Naive thymus-derived CD4-positive, alpha-beta T cell (primary cell): ENCODE measurements at regions of chr4 and their contacts with region 1.

Region 1: GRCh38 chr4:173505924-173506518 is 24.0 kb downstream of the HAND2 start:
- DNase-seq: no peak
- ATAC-seq: peak; percentile 49
- H3K4me3 ChIP-seq: peak overlapping the region; percentile 26
- H3K4me3 Mint-ChIP-seq: peak overlapping the region in 9 of 10 donors; percentile 58 to 85 (median 81)
- H3K27ac ChIP-seq: no peak overlapping the region
- H3K27ac Mint-ChIP-seq: no peak overlapping the region
- H3K4me1 ChIP-seq: peaks cover 4 to 24% of the 10 kb centered on the region in 2 donors
- H3K4me1 Mint-ChIP-seq: peaks cover 16 to 56% (median 44%) of the 10 kb centered on the region in 7 donors
- H3K27me3 ChIP-seq: peaks cover 0 to 38% of the 10 kb centered on the region in 2 donors
- H3K27me3 Mint-ChIP-seq: peaks cover 83 to 96% (median 90%) of the 10 kb centered on the region in 5 donors

Region 2: DNA sequence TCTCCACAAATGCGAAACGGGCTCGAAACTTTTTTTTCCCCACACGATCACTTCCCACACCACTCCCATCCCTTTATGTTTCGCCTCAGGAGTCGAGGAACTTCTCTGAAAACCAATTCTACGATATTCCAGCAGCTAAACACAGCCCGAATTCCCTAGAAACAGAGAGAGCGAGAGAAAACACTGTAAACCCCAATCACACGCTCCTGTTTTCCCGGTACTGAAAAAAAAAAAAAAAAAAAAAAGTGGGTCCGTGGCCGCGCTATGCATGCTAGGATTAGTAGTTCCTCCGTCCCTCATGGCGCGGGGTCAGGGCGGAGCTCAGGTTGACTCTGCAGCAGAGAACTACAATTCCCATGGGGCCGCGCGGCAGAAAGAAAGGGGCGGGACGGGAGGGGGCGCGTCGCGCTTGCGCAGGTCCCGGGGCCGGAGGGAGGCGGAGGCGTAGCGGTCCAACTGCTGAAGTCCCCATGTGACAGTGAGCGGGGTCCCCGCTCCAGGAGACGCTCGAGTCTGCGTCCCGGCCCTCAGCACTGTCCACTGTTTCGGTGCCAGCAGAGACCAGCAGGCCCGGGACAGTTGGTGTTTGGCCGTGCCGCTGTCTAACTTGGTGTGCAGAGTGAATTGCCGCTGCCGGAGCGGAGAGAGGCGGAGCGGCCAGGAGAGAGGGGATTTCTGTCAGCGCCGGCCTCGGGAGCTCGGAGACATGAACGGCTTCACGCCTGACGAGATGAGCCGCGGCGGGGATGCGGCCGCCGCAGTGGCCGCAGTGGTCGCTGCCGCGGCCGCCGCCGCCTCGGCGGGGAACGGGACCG is 135.3 kb before region 1 on chr4 and contains the start of gene SAP30:
- CTCF ChIA-PET with region 1: no interaction called
- POLR2A ChIA-PET with region 1: no interaction called
- intact Hi-C with region 1: no loop called
- DNase-seq: peak; percentile 88 to 97 (median 91)
- ATAC-seq: peak; percentile 91
- H3K4me3 ChIP-seq: peak within 1 kb of the TSS; percentile 99
- H3K4me3 Mint-ChIP-seq: peak within 1 kb of the TSS; percentile 89 to 100 (median 98)
- H3K27ac ChIP-seq: peak within 1 kb of the TSS; percentile 82
- H3K27ac Mint-ChIP-seq: peak within 1 kb of the TSS; percentile 88 to 99 (median 97)
- H3K4me1 ChIP-seq: peaks cover 5 to 20% of the 10 kb centered on the region in 2 donors
- H3K4me1 Mint-ChIP-seq: peaks cover 14 to 46% (median 18%) of the 10 kb centered on the region in 7 donors
- H3K27me3 ChIP-seq: peaks cover 0 to 10% of the 10 kb centered on the region in 2 donors
- H3K27me3 Mint-ChIP-seq: peaks cover 2 to 29% (median 17%) of the 10 kb centered on the region in 5 donors
- total RNA-seq, gene SAP30: 0.48 to 27.4 (median 1.1) TPM

Region 3: DNA sequence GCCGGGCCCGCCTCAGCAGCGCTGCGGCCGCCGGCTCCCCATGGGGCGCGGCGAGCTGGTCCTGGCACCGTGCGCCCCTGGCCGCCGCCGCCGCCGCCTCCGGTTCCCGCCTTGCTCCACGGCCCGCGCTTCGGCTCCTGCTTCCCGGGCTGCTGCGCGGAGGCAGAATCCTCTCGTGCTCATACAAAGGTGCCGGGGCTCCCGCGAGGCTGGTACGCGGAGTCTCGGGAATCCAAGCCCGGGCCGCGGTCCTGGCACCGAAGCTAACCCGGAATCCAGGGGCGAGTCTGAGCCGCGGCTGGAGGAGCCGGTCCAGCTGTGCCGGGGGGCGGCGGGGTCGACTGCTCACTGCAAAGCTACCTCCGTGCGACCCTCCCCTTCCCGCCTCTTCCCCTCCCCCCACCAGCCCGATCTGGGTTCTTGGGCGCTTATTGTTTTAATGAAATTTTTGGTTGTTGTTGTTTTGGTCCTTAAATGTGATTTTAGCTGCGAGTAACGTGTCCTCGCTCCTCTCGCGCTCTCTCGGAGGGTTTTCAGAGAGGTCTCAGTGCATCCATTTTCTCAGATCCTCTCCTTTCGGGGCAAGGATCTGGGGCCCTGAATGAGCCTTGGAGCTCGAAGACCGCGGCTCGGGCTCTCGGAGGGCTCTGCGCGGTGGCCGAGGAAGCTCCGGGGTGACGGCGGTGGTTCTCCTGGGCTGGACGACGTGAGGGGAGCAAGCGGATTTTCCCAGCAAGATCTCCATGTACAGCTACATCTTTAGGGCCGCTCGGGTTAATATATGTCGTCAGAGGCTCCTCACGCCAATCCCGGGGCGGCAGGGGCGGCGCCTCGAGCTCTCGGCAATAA is 23.7 kb after region 1 on chr4 and contains the start of gene HAND2:
- CTCF ChIA-PET with region 1: no interaction called
- POLR2A ChIA-PET with region 1: no interaction called
- intact Hi-C with region 1: loop called in 1 of 2 experiments (anchors 2 kb)
- DNase-seq: no peak
- ATAC-seq: no peak
- H3K4me3 ChIP-seq: no peak within 1 kb of the TSS
- H3K4me3 Mint-ChIP-seq: peak within 1 kb of the TSS; percentile 57 to 79 (median 72)
- H3K27ac ChIP-seq: no peak within 1 kb of the TSS
- H3K27ac Mint-ChIP-seq: peak within 1 kb of the TSS in 4 of 9 donors; percentile 19 to 87 (median 58)
- H3K4me1 ChIP-seq: peaks cover 4 to 6% of the 10 kb centered on the region in 2 donors
- H3K4me1 Mint-ChIP-seq: peaks cover 5 to 33% (median 27%) of the 10 kb centered on the region in 7 donors
- H3K27me3 ChIP-seq: peaks cover 9 to 52% of the 10 kb centered on the region in 2 donors
- H3K27me3 Mint-ChIP-seq: peaks cover 88 to 91% (median 90%) of the 10 kb centered on the region in 5 donors
- total RNA-seq, gene HAND2: not detected

Region 4: GRCh38 chr4:173752610-173753230 is 246.7 kb after region 1 on chr4:
- CTCF ChIA-PET with region 1: no interaction called
- POLR2A ChIA-PET with region 1: no interaction called
- intact Hi-C with region 1: loop called in 1 of 2 experiments (anchors 1 kb)
- DNase-seq: peak in 2 of 9 donors; percentile 1 to 31
- ATAC-seq: no peak
- H3K4me3 ChIP-seq: no peak overlapping the region
- H3K4me3 Mint-ChIP-seq: no peak overlapping the region
- H3K27ac ChIP-seq: no peak overlapping the region
- H3K27ac Mint-ChIP-seq: no peak overlapping the region
- H3K4me1 ChIP-seq: no peaks in the 10 kb centered on the region
- H3K4me1 Mint-ChIP-seq: no peaks in the 10 kb centered on the region
- H3K27me3 ChIP-seq: no peaks in the 10 kb centered on the region
- H3K27me3 Mint-ChIP-seq: peaks cover 0 to 11% (median 0%) of the 10 kb centered on the region in 5 donors

Region 5: GRCh38 chr4:173990126-173990868 is 484.3 kb after region 1 on chr4:
- CTCF ChIA-PET with region 1: no interaction called
- POLR2A ChIA-PET with region 1: no interaction called
- intact Hi-C with region 1: loop called in 1 of 2 experiments (anchors 5 kb)
- DNase-seq: no peak
- ATAC-seq: no peak
- H3K4me3 ChIP-seq: no peak overlapping the region
- H3K4me3 Mint-ChIP-seq: no peak overlapping the region
- H3K27ac ChIP-seq: no peak overlapping the region
- H3K27ac Mint-ChIP-seq: no peak overlapping the region
- H3K4me1 ChIP-seq: no peaks in the 10 kb centered on the region
- H3K4me1 Mint-ChIP-seq: peaks cover 0 to 2% (median 0%) of the 10 kb centered on the region in 7 donors
- H3K27me3 ChIP-seq: peaks cover 0 to 3% of the 10 kb centered on the region in 2 donors
- H3K27me3 Mint-ChIP-seq: peaks cover 0 to 9% (median 5%) of the 10 kb centered on the region in 5 donors

Region 6: DNA sequence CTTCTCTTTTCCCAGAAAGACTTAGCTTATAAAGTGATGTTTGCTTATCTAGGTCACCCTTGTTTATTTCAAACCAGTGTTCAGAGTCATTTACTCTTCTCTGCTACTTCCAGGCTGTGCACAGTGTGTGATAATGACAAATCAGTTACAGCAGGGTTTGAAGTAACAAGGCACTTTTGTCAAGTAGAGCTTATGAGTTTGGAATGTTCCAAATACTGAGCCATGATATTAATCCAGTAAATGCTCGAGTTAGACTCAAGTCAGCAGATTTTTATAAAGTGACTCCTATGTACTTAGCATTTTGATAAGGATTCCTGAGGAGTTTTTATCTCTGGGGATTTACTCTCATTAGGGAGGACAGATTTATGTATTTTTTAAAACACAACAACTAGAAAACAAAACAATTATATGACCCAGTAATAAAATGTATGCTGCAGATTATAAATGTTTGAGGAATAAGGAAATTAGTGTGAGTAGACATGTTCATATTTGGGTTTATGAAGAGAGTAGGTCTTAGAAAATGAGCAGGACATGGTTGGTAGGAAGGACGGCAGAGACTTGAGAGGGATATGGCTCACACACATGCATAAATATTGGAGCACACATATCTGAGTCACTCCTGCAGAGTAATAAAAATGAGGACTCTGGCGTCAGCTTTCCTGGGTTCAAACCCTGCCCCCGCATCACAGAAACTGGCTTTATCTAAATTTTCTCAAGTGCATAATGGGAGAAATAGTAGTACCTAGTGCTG is 506.3 kb after region 1 on chr4:
- CTCF ChIA-PET with region 1: no interaction called
- POLR2A ChIA-PET with region 1: no interaction called
- intact Hi-C with region 1: no loop called
- DNase-seq: no peak
- ATAC-seq: no peak
- H3K4me3 ChIP-seq: no peak overlapping the region
- H3K4me3 Mint-ChIP-seq: no peak overlapping the region
- H3K27ac ChIP-seq: no peak overlapping the region
- H3K27ac Mint-ChIP-seq: no peak overlapping the region
- H3K4me1 ChIP-seq: no peaks in the 10 kb centered on the region
- H3K4me1 Mint-ChIP-seq: no peaks in the 10 kb centered on the region
- H3K27me3 ChIP-seq: no peaks in the 10 kb centered on the region
- H3K27me3 Mint-ChIP-seq: peaks cover 0 to 10% (median 5%) of the 10 kb centered on the region in 5 donors

Region 7: DNA sequence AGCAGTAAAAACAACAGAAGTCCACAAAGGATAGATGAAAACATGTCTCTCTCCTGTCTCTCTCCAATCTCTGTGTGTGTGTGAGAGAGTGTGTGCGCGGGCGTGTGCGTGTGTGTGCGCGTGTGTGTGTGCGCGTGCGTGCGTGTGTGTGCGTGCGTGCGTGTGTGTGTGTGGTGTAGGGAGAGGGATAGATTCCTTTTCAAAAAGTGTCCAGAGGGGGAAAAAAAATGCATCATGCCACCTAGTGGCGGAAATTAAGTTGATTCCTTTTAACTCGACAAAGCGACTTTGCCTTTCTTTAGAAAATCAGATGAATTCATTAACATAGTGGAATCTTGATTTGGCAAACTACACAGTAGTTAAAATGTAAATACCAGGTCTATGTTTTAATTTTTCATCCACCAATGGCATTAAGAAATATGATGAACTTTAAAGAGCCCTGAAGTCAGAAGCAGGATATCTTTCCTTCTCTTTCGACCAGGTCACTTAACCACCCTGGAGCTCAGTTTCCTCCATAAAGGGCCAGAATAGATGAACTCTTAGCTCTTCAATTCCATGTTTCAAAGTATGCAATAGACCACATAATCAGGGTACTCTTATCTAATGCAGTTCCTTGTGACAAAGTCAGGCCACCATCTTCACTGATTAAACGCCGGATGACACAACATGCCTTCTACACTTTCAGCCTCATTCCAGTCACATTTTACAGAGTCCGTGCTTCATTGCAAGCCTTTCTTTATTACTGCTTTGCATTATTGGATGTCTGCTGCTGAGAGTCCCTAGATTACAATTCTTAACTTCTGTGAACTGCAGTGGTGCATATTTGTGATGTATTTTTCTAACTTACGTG is 614.6 kb after region 1 on chr4:
- CTCF ChIA-PET with region 1: no interaction called
- POLR2A ChIA-PET with region 1: no interaction called
- intact Hi-C with region 1: loop called in 1 of 2 experiments (anchors 1 kb)
- DNase-seq: peak in 2 of 9 donors; percentile 2 to 19
- ATAC-seq: peak; percentile 56
- H3K4me3 ChIP-seq: no peak overlapping the region
- H3K4me3 Mint-ChIP-seq: peak overlapping the region in 3 of 10 donors; percentile 14 to 63 (median 42)
- H3K27ac ChIP-seq: no peak overlapping the region
- H3K27ac Mint-ChIP-seq: peak overlapping the region in 1 of 9 donors; percentile 2
- H3K4me1 ChIP-seq: no peaks in the 10 kb centered on the region
- H3K4me1 Mint-ChIP-seq: peaks cover 0 to 5% (median 0%) of the 10 kb centered on the region in 7 donors
- H3K27me3 ChIP-seq: no peaks in the 10 kb centered on the region
- H3K27me3 Mint-ChIP-seq: peaks cover 40 to 71% (median 56%) of the 10 kb centered on the region in 5 donors

Region 8: DNA sequence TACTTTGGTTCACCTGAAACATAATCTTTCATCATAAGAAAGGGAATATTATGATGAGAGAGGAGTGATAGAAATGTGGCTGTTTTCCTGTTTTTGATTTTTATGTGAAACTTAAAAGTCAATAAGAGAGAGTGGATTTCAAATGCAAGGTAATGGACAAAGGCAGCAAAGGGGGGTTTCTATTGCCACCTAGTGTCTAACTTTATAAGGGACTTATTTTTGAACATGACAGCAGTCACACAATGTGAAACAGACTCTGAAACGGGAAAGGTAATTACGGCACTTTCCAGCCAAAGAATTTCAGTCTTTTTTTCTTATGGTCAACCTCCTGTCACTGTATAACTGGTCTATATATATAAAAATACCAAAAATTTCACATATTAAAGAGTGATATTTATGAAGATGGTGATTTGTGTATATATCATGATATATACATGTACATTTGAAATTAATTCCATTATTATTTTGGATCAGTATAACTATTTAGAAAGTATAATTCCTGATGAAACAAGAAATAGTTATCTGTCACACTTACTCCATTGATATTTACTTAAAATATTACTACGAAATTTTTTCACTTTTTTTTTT is 650.3 kb after region 1 on chr4:
- CTCF ChIA-PET with region 1: no interaction called
- POLR2A ChIA-PET with region 1: no interaction called
- intact Hi-C with region 1: loop called (anchors 1 kb)
- DNase-seq: peak in 3 of 9 donors; percentile 6 to 18 (median 14)
- ATAC-seq: peak; percentile 31
- H3K4me3 ChIP-seq: no peak overlapping the region
- H3K4me3 Mint-ChIP-seq: no peak overlapping the region
- H3K27ac ChIP-seq: no peak overlapping the region
- H3K27ac Mint-ChIP-seq: no peak overlapping the region
- H3K4me1 ChIP-seq: no peaks in the 10 kb centered on the region
- H3K4me1 Mint-ChIP-seq: no peaks in the 10 kb centered on the region
- H3K27me3 ChIP-seq: no peaks in the 10 kb centered on the region
- H3K27me3 Mint-ChIP-seq: peaks cover 2 to 44% (median 33%) of the 10 kb centered on the region in 5 donors

Region 9: GRCh38 chr4:174318829-174319764 is 813.1 kb after region 1 on chr4:
- CTCF ChIA-PET with region 1: no interaction called
- POLR2A ChIA-PET with region 1: no interaction called
- intact Hi-C with region 1: loop called (anchors 1 to 10 kb)
- DNase-seq: peak in 5 of 9 donors; percentile 27 to 45 (median 39)
- ATAC-seq: no peak
- H3K4me3 ChIP-seq: no peak overlapping the region
- H3K4me3 Mint-ChIP-seq: no peak overlapping the region
- H3K27ac ChIP-seq: no peak overlapping the region
- H3K27ac Mint-ChIP-seq: no peak overlapping the region
- H3K4me1 ChIP-seq: no peaks in the 10 kb centered on the region
- H3K4me1 Mint-ChIP-seq: no peaks in the 10 kb centered on the region
- H3K27me3 ChIP-seq: no peaks in the 10 kb centered on the region
- H3K27me3 Mint-ChIP-seq: no peaks in the 10 kb centered on the region